ENCODE measurements at regions of chr10 and their contacts with region 1.

Region 1: GRCh38 chr10:12448729-12449391 is 99.5 kb downstream of the CAMK1D start:
- DNase-seq: peak in 1 of 2 donors; percentile 79
- H3K4me3 ChIP-seq: peak overlapping the region; percentile 32 to 34
- H3K27ac ChIP-seq: peak overlapping the region; percentile 55 to 66
- H3K4me1 ChIP-seq: peaks cover 0 to 14% of the 10 kb centered on the region in 2 donors
- H3K27me3 ChIP-seq: no peaks in the 10 kb centered on the region
- CTCF ChIP-seq: no peak

Region 2: GRCh38 chr10:12484941-12485805 is 36.3 kb after region 1 on chr10:
- intact Hi-C with region 1: loop called (anchors 2 kb)
- DNase-seq: peak in 1 of 2 donors; percentile 82
- H3K4me3 ChIP-seq: peak overlapping the region; percentile 18 to 57
- H3K27ac ChIP-seq: peak overlapping the region; percentile 73 to 90
- H3K4me1 ChIP-seq: peaks cover 3 to 16% of the 10 kb centered on the region in 2 donors
- H3K27me3 ChIP-seq: no peaks in the 10 kb centered on the region
- CTCF ChIP-seq: peak in 2 of 3 experiments; percentile 16 to 20

Region 3: GRCh38 chr10:12768156-12769100 is 319.6 kb after region 1 on chr10:
- intact Hi-C with region 1: no loop called
- DNase-seq: no peak
- H3K4me3 ChIP-seq: no peak overlapping the region
- H3K27ac ChIP-seq: no peak overlapping the region
- H3K4me1 ChIP-seq: no peaks in the 10 kb centered on the region
- H3K27me3 ChIP-seq: no peaks in the 10 kb centered on the region
- CTCF ChIP-seq: no peak

Region 4: GRCh38 chr10:12806228-12807095 is 357.6 kb after region 1 on chr10:
- intact Hi-C with region 1: no loop called
- DNase-seq: no peak
- H3K4me3 ChIP-seq: no peak overlapping the region
- H3K27ac ChIP-seq: no peak overlapping the region
- H3K4me1 ChIP-seq: no peaks in the 10 kb centered on the region
- H3K27me3 ChIP-seq: no peaks in the 10 kb centered on the region
- CTCF ChIP-seq: no peak

Measured in ascending aorta (tissue), 2 donors.